ENCODE measurements at regions of chr12 and their contacts with region 1.

Region 1: DNA sequence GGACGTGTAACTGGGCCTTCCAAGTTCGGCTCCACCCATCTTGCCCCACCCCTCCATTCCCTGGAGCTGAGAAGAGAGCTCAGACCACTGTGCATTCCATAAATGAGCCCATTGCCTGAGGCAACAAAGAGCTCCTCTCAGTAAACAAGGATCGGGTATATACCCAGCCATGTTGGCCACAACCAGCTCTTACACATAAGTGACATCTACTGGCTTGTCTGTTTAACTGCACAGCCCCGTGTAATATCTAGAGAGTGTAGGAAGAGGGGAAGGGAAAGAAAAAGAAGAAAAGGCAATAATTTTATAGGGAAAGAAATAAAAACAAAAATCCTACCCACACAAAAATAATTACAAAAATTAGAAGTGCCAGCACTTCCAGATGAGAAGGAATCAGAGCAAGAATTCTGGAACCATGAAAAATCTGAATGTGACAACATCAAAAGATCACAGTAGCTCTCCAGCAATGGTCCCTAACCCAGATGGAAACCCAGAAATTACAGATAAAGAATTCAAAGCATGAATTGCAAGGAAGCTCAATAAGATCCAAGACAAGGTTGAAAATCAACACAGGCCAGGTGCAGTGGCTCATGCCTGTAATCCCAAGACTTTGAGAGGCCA is 308.1 kb downstream of the RPAP3 start:
- DNase-seq: no peak

Region 2: DNA sequence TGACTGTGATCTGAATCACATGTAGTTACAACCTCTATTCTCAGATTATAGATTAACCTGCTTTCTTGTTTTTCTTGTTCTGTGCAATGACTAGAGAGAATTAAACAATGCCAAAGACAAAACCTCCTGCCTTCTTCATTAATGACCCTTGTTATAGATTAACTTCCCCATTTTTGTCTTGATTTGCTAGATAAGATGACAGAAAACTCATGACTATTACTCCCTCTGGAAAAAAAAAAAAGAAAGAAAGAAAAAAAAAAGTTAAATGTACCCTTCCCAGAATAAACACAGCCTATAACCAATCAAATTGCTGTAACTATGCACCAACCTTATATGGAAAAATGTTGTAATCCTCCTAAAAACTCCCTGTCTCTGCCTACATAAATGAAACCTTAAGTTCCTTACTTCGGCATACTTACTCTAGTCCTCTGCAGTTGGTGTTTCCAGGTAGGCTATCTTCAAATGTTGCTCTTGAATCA is 359.5 kb before region 1 on chr12:
- intact Hi-C with region 1: loop called (anchors 5 kb)
- DNase-seq: no peak

Region 3: GRCh38 chr12:47828608-47829536 is 431.1 kb after region 1 on chr12:
- intact Hi-C with region 1: no loop called
- DNase-seq: peak; percentile 90

Measured in cardiac septum (tissue), 1 donor.